ENCODE measurements at regions of chr11 and their contacts with region 1.

Region 1: DNA sequence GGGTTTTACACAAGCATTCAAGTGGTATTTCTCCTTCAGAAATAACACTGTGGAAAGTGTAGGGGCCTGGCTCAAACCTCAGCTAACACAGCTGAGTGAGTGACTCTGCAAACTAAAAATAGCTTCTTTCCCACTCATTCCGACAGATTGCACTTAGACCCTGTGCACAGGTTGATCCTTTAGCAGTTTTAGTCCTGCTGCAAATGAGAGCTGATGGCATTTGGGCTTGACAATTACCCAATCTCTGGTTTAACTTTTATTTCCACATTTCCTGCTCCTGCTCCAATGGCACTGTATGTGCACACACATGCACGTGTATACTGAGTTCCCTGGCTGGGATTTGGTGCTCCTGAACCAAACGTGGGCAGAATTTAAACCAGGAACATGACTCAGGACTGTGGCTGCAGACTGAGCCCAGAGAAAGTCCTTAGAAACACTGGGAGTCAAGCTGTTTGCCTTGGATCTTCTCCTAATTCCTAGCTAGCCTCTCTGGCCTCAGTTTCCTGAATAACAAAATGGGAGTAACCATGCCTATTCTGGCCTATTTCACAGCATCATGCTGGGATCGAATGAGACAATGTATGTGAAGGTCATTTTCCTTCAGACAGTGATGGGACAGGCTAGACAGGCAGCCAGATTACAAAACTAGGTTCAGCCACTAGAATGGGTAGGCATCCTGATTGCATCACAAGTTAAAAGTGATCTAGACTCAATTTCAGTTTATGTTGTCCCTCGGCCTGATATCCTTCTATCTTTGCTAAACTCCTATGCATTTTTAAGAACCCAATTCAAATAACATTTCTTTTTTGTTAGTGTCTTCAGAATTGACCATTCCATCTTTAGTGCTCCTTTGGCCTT is 58.2 kb downstream of the SERGEF start:
- DNase-seq: peak; percentile 32 to 78
- ATAC-seq: peak; percentile 92 to 93
- H3K4me3 ChIP-seq: no peak overlapping the region
- H3K27ac ChIP-seq: peak overlapping the region; percentile 78 to 90 (median 80)
- H3K4me1 ChIP-seq: peaks cover 30 to 32% of the 10 kb centered on the region in 2 donors
- H3K27me3 ChIP-seq: no peaks in the 10 kb centered on the region
- CTCF ChIP-seq: no peak
- POLR2A ChIP-seq: no peak

Region 2: GRCh38 chr11:17921659-17922415 is 32.8 kb before region 1 on chr11:
- in situ Hi-C with region 1: no loop called
- intact Hi-C with region 1: loop called (anchors 1 kb)
- DNase-seq: peak; percentile 50 to 72
- ATAC-seq: peak; percentile 94
- H3K4me3 ChIP-seq: no peak overlapping the region
- H3K27ac ChIP-seq: peak overlapping the region; percentile 70 to 83 (median 77)
- H3K4me1 ChIP-seq: peaks cover 23 to 39% of the 10 kb centered on the region in 2 donors
- H3K27me3 ChIP-seq: no peaks in the 10 kb centered on the region
- CTCF ChIP-seq: no peak
- POLR2A ChIP-seq: no peak

Measured in gastrocnemius medialis (tissue), 4 donors.